ENCODE measurements at regions of chr1 and their contacts with region 1.

Region 1: DNA sequence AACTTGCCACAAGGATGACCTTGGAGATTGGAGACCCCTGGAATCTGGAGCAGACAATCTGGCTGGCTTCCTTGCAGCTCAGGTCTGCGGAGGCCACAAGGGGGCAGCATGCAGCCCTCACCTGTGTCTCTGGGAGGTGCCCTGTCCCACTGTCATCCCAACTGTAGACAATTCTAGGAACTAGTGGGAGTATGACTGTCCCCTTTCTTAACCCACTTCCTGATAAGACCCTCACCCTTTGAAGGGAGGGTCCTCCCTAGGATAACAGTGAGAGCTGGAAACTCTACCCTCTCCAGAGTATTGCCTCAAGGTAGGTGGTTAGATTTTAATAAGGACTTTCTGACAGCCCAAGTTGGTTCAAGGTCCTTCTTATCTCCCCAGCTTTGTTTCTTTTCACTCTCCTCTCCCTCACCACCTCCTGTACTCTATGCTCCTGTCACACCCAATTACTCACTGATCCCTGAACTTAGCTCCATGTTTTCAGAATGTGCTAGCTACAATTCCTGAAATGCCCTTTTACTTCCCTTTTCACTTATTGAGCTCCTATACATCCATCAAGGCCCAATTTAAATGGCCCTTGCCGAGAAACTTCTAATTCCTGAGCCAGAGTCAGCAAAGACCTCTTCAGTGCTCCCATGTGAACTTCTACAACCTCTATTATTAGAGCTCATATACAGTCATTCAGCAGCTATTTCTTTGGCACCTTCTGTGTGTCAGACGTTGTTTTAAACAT is 9.2 kb upstream of the KCNQ4 start:
- DNase-seq: no peak
- H3K4me3 ChIP-seq: no peak overlapping the region
- H3K27me3 ChIP-seq: no peaks in the 10 kb centered on the region
- CTCF ChIP-seq: peak; percentile 79

Region 2: GRCh38 chr1:40185951-40186864 is 588.2 kb before region 1 on chr1:
- CTCF ChIA-PET with region 1: no interaction called
- POLR2A ChIA-PET with region 1: no interaction called
- DNase-seq: no peak
- H3K4me3 ChIP-seq: no peak overlapping the region
- H3K27me3 ChIP-seq: no peaks in the 10 kb centered on the region
- CTCF ChIP-seq: no peak

Region 3: GRCh38 chr1:40755067-40755466 is 19.4 kb before region 1 on chr1:
- CTCF ChIA-PET with region 1: interaction called, 18 read pairs
- POLR2A ChIA-PET with region 1: no interaction called
- DNase-seq: no peak
- H3K4me3 ChIP-seq: no peak overlapping the region
- H3K27me3 ChIP-seq: no peaks in the 10 kb centered on the region
- CTCF ChIP-seq: no peak

Region 4: DNA sequence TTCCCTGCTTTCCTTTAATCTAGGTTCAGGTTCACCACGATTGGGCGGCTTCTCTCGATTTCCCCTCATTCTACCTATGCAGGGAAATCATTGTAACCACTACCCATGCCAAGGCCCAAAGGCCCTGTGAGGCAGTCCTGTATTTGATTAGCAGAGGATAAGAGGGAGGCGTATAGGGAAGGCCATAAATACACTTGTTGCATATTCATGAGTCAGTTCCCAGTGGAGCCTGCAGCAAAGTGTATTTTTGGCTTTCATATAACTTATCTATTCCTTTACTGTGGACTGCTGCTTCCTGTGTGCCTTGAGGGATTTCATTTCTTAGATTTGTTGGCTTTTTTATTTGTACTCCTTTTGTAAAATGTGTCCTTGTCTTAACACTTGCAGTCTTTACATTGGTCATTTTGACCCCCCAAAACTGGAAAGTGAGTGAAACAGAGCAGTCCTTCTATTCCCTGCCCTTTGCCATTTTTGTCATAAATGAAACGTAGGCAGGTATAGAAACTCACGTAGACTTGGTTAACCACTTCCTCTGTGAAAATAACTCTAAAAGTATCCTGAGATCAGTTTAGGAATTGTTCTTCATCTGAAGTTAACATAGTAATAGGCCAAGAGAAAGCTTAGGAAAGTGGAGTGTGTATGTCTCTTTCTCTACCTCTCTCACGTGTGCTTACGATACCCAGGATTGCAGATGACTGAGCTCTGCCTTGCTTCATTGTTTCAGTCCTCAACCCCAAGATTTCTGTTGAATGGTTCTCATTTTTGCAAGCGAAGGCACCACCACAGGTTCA is 10.5 kb before region 1 on chr1:
- CTCF ChIA-PET with region 1: interaction called, 22 read pairs
- POLR2A ChIA-PET with region 1: no interaction called
- DNase-seq: no peak
- H3K4me3 ChIP-seq: no peak overlapping the region
- H3K27me3 ChIP-seq: no peaks in the 10 kb centered on the region
- CTCF ChIP-seq: no peak

Region 5: DNA sequence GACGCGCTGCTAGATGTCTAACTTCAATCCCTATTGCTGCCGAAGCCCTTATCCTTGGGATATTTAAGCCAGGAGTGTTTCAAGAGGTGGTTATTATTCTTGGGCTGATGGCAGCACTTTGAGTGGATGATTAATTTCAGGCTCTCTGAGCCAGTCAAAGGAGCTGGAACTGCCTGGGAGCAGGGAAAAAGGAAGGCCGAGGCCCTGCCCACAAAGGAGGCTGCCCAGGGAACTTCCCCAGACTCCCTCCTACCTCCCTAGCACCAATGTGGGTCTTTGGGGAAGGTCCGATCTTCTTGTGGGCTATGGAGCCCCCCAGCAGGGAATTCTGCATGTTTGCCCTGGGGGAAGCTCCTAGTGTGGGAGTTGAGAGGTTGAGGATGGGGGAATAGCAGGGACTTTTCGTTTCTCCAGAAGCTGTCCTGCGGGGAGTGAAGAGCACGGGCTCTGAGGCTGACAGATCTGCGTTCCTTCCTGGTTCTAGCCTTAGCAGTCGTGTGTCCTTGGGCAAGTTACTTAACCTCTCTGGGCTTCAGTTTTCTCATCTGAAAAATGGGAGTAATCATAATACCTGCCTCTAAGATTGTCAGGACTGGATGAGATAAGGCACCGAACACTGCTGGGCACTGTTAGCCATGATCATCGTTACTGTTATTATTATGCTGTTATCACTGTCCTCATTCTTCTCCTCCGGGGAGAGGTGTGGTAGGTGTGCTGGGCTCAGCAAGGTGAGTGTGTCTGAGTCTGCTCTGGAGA is 15.4 kb after region 1 on chr1:
- CTCF ChIA-PET with region 1: interaction called, 18 read pairs
- POLR2A ChIA-PET with region 1: no interaction called
- DNase-seq: no peak
- H3K4me3 ChIP-seq: no peak overlapping the region
- H3K27me3 ChIP-seq: peaks cover 20% of the 10 kb centered on the region
- CTCF ChIP-seq: no peak

Region 6: DNA sequence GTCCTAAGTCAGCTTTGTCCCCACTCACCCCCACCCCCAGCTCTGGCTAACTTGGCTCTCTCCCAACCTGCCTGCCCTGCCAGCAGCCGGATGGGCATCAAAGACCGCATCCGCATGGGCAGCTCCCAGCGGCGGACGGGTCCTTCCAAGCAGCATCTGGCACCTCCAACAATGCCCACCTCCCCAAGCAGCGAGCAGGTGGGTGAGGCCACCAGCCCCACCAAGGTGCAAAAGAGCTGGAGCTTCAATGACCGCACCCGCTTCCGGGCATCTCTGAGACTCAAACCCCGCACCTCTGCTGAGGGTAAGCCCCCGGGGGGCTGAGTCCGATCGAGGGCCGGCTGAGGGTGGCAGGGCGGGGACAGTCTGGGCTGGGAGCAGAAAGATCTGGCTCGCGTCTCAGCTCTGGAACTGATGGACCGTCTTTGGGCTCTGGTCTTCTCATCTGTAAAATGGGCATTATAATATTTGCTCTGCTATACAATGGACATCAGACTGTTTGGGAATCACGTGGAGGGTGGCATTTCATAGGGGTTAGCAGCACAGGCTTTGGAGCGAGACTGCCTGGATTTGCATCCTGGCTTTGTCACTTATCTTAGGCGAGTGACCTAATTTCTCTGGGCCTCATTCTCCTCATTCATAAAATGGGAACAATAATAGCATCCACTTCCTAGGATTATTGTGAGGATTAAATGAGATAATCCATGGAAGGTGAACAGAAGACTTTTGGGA is 56.7 kb after region 1 on chr1:
- CTCF ChIA-PET with region 1: no interaction called
- POLR2A ChIA-PET with region 1: no interaction called
- DNase-seq: no peak
- H3K4me3 ChIP-seq: no peak overlapping the region
- H3K27me3 ChIP-seq: peaks cover 2% of the 10 kb centered on the region; the same call in 1 of the 2 replicates
- CTCF ChIP-seq: no peak